AG04450 (cell line): ENCODE measurements at regions of chr1 and their contacts with region 1.

Region 1: DNA sequence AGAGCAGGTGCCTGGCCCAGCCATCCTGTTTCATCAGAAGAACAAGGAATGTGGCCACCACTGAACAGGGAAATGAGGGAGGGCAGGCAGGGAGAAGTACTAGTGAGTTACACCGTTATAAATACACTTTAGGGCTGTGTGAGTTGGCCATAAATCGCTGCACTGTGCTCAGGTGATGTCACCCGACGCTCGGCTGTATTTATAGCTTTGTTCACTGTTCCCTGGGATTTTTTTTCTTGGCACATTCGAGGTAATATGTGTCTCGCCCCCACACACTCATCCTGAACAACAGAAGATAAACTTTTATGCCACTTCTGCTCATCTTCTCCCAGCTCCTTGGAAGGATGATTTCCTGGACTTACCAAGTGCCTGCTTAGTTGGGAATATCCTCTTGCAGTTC is 9.0 kb upstream of the KIRREL1 start:
- DNase-seq: no peak
- H3K4me3 ChIP-seq: no peak overlapping the region
- H3K27ac ChIP-seq: no peak overlapping the region
- H3K27me3 ChIP-seq: peaks cover 58% of the 10 kb centered on the region
- CTCF ChIP-seq: no peak

Region 2: DNA sequence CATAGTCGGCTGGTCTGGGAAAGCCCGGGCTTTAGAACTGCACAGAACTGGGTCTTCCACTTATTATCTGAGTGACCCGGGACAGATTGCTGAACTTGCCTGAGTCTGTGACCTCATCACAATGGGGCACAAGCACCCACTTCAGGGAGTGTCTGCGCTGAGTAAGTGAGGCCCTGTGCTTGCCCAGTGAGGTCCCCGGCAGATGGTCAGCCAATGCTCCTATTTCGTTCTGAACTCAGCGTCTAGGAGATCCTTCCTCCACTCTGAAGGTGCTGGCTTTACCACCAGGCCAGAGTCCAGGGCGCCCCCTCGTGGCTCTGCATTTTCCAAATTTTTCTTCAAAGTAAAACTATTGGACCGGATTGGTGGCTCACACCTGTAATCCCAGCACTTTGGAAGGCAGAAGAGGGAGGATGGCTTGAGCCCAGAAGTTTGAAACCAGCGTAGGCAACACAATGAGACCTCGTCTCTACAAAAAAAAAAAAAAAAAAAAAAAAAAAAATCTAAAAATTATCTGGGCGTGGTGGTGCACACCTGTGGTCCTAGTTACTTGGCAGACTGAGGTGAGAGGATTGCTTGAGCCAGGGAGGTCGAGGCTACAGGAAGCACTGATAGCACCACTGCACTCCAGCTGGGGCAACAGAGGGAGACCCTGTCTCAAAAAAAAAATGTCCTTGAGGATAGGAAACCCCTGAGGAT is 493.9 kb before region 1 on chr1:
- CTCF ChIA-PET with region 1: no interaction called
- POLR2A ChIA-PET with region 1: no interaction called
- DNase-seq: no peak
- H3K4me3 ChIP-seq: no peak overlapping the region
- H3K27ac ChIP-seq: no peak overlapping the region
- H3K27me3 ChIP-seq: no peaks in the 10 kb centered on the region
- CTCF ChIP-seq: peak; percentile 64

Region 3: DNA sequence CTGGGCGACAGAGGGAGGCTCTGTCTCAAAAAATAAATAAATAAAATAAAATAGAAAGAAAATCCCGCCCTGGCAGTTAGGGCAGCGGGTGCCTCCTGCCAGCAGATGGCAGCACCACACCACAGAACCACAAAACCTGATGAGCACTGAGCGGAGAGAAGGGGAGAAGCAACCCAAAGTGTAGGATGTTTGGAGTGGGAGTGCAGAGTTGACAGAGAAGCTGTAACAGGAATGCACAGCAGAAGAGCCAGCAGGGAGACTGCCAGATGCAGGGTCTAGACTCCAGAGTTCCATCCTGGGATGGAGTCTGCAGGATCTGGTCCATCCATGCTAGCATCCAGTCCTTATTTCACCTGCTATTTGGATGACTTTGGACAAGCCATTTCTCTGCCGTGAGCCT is 20.8 kb before region 1 on chr1:
- CTCF ChIA-PET with region 1: interaction called, 108 read pairs
- POLR2A ChIA-PET with region 1: no interaction called
- DNase-seq: peak; percentile 51
- H3K4me3 ChIP-seq: no peak overlapping the region
- H3K27ac ChIP-seq: no peak overlapping the region
- H3K27me3 ChIP-seq: peaks cover 16% of the 10 kb centered on the region
- CTCF ChIP-seq: peak; percentile 92

Region 4: DNA sequence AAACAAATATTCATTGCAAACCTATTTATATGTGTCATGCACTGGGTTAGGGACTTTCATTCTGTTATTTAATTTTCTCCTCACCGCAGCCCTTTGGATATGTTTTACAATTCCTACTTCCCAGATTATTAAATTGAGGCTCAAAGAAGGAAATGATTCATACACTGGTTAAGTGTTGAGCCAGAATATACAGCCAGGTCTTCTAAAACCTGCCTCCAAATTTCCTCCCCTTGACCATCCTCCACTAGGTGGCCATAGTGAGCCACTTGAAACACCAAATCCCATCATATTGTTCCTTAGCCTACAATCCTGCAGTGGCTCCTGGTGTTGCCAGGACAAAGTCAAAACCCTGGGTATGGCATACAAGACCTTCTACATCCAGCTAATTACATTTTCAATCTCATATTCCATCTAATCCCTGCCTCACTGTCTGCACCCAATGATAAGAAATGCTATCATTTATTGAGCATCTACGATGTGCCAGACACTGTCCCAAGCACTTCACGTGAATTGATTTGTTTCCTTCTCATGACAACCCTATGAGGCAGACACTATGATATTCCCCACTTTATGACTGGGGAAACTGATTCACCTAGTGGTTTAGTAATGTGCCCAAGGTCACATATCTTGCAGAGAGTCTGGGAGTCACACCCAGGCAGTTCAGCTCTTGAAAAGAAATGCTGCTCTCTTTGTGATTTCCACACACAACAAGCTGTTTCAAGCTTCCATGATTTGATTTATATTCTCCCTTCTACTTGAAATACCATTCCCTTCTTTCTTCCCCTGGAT is 14.6 kb before region 1 on chr1:
- CTCF ChIA-PET with region 1: interaction called, 108 read pairs
- POLR2A ChIA-PET with region 1: no interaction called
- DNase-seq: peak; percentile 65
- H3K4me3 ChIP-seq: no peak overlapping the region
- H3K27ac ChIP-seq: peak overlapping the region; percentile 94
- H3K27me3 ChIP-seq: peaks cover 3% of the 10 kb centered on the region
- CTCF ChIP-seq: peak; percentile 98